ENCODE measurements at regions of chr13 and their contacts with region 1.

Region 1: DNA sequence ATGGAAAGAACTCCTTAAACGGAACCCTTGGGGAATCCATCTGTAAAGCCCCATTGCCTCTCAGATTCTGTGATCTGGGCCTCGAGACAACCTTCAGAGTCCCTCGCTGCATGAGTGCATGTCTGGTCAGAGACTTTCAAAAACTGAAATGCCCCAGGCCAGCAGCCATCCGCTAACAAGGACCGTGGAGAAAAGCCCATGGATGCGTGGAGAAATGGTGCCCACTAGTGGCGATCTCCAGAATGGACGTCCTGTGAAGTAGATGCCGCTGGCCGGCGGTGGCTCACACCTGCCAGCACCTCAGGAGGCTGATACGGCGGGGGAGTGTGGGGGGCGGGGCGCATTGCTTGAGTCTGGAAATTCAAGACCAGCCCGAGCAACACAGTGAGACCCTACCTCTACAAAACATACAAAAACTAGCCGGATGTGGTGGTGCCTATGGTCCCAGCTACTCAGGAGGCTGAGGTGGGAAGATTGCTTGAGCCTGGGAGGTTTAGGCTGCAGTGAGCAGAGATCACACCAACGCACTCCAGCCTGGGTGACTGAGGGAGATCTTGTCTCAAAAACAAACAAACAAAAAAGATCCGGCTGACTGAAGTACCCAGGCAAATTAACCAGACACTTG is 7.9 kb upstream of the CDC16 start:
- DNase-seq: peak; percentile 15
- H3K4me3 ChIP-seq: no peak overlapping the region
- H3K27me3 ChIP-seq: no peaks in the 10 kb centered on the region; the same call in 1 of the 2 replicates
- CTCF ChIP-seq: peak; percentile 94

Region 2: GRCh38 chr13:113963376-113963775 is 263.4 kb before region 1 on chr13:
- CTCF ChIA-PET with region 1: interaction called, 11 read pairs
- POLR2A ChIA-PET with region 1: no interaction called
- DNase-seq: no peak
- H3K4me3 ChIP-seq: no peak overlapping the region
- H3K27me3 ChIP-seq: no peaks in the 10 kb centered on the region
- CTCF ChIP-seq: no peak